ENCODE measurements at regions of chr17 and their contacts with region 1.

Region 1: DNA sequence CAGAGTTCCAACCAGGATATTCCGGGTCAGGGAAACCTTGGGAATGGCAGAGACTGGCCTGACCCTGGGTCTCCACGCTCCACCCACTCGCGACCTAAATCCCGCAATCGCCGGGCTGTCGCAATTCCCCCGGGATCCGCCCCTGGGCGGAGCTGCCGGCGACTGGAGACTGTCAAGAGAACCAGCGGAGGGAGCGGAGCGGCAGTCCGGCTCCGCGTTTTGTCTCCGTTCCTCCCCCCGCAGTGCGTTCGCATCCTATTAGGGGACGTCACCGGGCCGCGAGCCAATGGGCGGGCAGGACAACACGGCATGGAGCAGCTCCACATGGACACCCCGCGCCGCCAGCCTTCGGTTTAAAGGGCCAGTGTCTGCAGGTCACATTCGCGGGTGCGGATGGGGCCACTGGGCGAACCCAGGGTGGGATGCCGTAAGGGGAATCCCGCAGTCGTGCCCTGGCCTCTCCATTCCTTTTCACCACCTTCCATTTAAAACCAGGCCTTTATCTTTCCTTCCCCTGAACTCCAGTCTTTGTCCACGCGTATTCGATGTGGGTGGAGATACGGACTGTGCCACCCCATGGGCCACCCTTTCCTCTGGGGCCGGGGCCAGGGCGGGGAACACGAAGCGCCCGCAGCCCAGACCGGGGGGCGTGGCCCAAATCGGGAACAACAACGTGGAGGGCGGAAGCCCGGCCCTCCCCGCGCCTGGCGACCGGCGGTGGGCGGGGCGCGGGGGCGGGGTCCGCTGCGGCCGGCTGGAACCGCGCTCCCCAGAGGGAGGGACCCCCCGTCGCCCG is 764 bp upstream of the MNT start:
- DNase-seq: peak; percentile 99 to 100 (median 99)
- ATAC-seq: peak; percentile 59
- H3K4me3 ChIP-seq: peak overlapping the region; percentile 65 to 71
- H3K4me3 Mint-ChIP-seq: peak overlapping the region; percentile 99
- H3K27ac ChIP-seq: peak overlapping the region; percentile 99
- H3K27ac Mint-ChIP-seq: peak overlapping the region; percentile 100
- H3K4me1 ChIP-seq: peaks cover 35% of the 10 kb centered on the region
- H3K4me1 Mint-ChIP-seq: peaks cover 36% of the 10 kb centered on the region
- H3K27me3 ChIP-seq: no peaks in the 10 kb centered on the region
- H3K27me3 Mint-ChIP-seq: no peaks in the 10 kb centered on the region
- CTCF ChIP-seq: no peak

Region 2: DNA sequence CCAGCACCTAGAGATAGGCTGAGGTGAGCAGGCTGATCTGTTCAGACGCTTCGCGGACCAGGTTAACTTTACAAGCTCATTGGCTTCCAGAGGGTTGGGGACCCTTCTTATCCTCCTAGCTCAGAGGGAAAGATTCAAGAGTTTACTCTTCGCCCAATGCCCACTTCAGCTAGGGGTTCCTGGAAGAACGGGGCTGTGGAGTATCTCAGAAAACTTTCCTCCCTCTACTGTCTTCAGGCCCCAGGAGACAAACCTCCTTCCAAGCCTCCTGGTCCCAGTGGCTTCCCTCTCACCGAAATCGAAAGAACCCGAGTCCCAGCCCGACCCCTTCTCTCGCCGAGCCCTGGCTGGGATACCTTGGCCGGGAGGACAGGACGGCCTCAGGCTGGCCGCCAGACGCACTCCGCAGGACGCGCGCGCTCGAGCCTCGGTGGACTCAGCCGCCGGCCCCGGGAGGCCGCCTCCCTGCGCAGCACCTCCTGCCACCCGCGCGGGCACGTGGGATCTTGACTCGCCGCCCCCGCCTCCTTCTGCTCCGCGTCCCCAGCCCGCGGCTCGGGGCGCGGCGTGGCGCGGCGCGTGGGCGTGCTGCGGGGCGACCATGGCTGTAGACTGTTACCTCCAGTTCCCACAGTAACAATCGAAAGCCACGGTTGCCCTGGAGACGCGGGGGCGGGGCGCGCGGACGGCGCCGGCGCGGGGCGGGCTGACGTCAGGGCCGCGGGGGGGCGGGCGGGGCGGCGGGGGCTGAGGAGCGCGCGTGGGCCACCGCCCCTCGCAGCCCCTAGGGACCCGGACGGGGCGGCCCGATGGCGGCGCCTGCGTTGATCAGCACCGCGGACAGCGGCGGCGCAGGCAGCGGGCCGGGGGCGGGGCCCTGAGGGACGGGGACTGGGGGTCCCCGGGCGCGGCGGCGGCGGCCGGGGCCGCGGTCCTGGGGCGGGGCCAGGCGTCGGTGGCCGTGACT is 352.0 kb before region 1 on chr17:
- CTCF ChIA-PET with region 1: no interaction called
- POLR2A ChIA-PET with region 1: no interaction called
- intact Hi-C with region 1: loop called (anchors 2 to 5 kb)
- DNase-seq: peak; percentile 84 to 93 (median 88)
- ATAC-seq: peak; percentile 69
- H3K4me3 ChIP-seq: peak overlapping the region; percentile 51 to 73
- H3K4me3 Mint-ChIP-seq: peak overlapping the region; percentile 70
- H3K27ac ChIP-seq: peak overlapping the region in 1 of 2 experiments; percentile 52
- H3K27ac Mint-ChIP-seq: no peak overlapping the region
- H3K4me1 ChIP-seq: peaks cover 45% of the 10 kb centered on the region
- H3K4me1 Mint-ChIP-seq: peaks cover 29% of the 10 kb centered on the region
- H3K27me3 ChIP-seq: no peaks in the 10 kb centered on the region
- H3K27me3 Mint-ChIP-seq: peaks cover 8% of the 10 kb centered on the region
- CTCF ChIP-seq: no peak

Region 3: GRCh38 chr17:2303204-2304188 is 98.1 kb before region 1 on chr17 and contains the starts of genes SMG6 and SRR:
- CTCF ChIA-PET with region 1: no interaction called
- POLR2A ChIA-PET with region 1: interaction called, 4 read pairs
- intact Hi-C with region 1: loop called (anchors 1 to 2 kb)
- DNase-seq: peak; percentile 89 to 98 (median 95)
- ATAC-seq: peak; percentile 91
- H3K4me3 ChIP-seq: peak within 1 kb of the TSS; percentile 95 to 98
- H3K4me3 Mint-ChIP-seq: peak within 1 kb of the TSS; percentile 93
- H3K27ac ChIP-seq: peak within 1 kb of the TSS; percentile 76 to 85
- H3K27ac Mint-ChIP-seq: peak within 1 kb of the TSS; percentile 91
- H3K4me1 ChIP-seq: peaks cover 18% of the 10 kb centered on the region
- H3K4me1 Mint-ChIP-seq: peaks cover 43% of the 10 kb centered on the region
- H3K27me3 ChIP-seq: no peaks in the 10 kb centered on the region
- H3K27me3 Mint-ChIP-seq: no peaks in the 10 kb centered on the region
- CTCF ChIP-seq: no peak
- total RNA-seq, gene SMG6: 36.1 to 37.8 TPM
- total RNA-seq, gene SRR: 1.8 to 2.9 TPM

Region 4: DNA sequence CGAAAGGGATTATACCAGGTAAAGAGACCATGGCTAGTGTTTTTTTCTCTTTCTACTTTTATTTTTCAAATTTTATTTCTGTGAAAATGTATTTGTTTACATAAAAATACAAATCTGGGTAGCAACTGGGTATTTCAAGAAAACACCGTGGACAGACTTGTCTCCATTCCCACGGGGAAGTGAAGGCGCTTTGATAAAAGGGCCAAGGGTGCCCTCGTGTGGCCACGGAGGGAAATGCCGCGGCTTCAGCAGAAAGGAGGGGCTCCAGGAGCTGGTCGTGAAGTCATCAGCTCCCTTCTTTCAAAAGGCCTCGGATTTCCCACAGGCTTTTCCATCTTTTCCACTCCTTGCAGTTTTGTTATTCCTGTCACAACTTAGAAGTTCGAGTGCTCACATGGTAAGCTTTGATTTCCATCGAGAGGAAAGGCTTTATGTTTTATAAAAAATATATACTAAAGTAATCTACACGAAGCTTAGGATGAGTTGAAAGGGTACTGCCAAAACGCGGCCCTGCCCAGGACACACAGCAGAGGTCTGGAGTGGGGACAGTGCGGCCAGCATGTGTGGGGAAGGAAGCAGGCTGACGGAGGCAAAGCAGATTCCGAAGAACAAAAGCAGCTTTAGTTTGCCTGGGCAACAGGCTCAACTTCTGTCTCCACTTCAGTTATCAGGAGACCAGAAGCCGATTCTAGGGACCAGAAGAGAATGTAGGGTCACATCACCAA is 14.5 kb after region 1 on chr17:
- CTCF ChIA-PET with region 1: interaction called, 34 read pairs
- POLR2A ChIA-PET with region 1: interaction called, 8 read pairs
- intact Hi-C with region 1: loop called (anchors 1 to 2 kb)
- DNase-seq: peak; percentile 74 to 92 (median 88)
- ATAC-seq: peak; percentile 93
- H3K4me3 ChIP-seq: no peak overlapping the region
- H3K4me3 Mint-ChIP-seq: no peak overlapping the region
- H3K27ac ChIP-seq: no peak overlapping the region
- H3K27ac Mint-ChIP-seq: no peak overlapping the region
- H3K4me1 ChIP-seq: peaks cover 4% of the 10 kb centered on the region
- H3K4me1 Mint-ChIP-seq: peaks cover 6% of the 10 kb centered on the region
- H3K27me3 ChIP-seq: no peaks in the 10 kb centered on the region
- H3K27me3 Mint-ChIP-seq: no peaks in the 10 kb centered on the region
- CTCF ChIP-seq: peak; percentile 99

Region 5: GRCh38 chr17:2758870-2759269 is 357.2 kb after region 1 on chr17:
- CTCF ChIA-PET with region 1: no interaction called
- POLR2A ChIA-PET with region 1: no interaction called
- intact Hi-C with region 1: no loop called
- DNase-seq: no peak
- ATAC-seq: no peak
- H3K4me3 ChIP-seq: no peak overlapping the region
- H3K4me3 Mint-ChIP-seq: no peak overlapping the region
- H3K27ac ChIP-seq: no peak overlapping the region
- H3K27ac Mint-ChIP-seq: no peak overlapping the region
- H3K4me1 ChIP-seq: peaks cover 5% of the 10 kb centered on the region
- H3K4me1 Mint-ChIP-seq: peaks cover 4% of the 10 kb centered on the region
- H3K27me3 ChIP-seq: peaks cover 12 to 15% of the 10 kb centered on the region in 2 experiments
- H3K27me3 Mint-ChIP-seq: peaks cover 47% of the 10 kb centered on the region
- CTCF ChIP-seq: no peak

Region 6: GRCh38 chr17:2814481-2815341 is 413.1 kb after region 1 on chr17:
- CTCF ChIA-PET with region 1: interaction called, 3 read pairs
- POLR2A ChIA-PET with region 1: no interaction called
- intact Hi-C with region 1: loop called in 1 of 2 experiments (anchors 2 kb)
- DNase-seq: peak; percentile 88 to 98 (median 96)
- ATAC-seq: peak; percentile 77
- H3K4me3 ChIP-seq: peak overlapping the region; percentile 52 to 64
- H3K4me3 Mint-ChIP-seq: peak overlapping the region; percentile 79
- H3K27ac ChIP-seq: peak overlapping the region; percentile 66 to 76
- H3K27ac Mint-ChIP-seq: peak overlapping the region; percentile 94
- H3K4me1 ChIP-seq: peaks cover 34% of the 10 kb centered on the region
- H3K4me1 Mint-ChIP-seq: peaks cover 31% of the 10 kb centered on the region
- H3K27me3 ChIP-seq: no peaks in the 10 kb centered on the region
- H3K27me3 Mint-ChIP-seq: no peaks in the 10 kb centered on the region
- CTCF ChIP-seq: no peak